ENCODE measurements at regions of chr2 and their contacts with region 1.

Region 1: GRCh38 chr2:224938651-224939182 is 103.6 kb downstream of the DOCK10 start:
- DNase-seq: peak in 1 of 9 donors; percentile 56
- ATAC-seq: peak; percentile 56
- H3K4me3 ChIP-seq: no peak overlapping the region
- H3K4me3 Mint-ChIP-seq: peak overlapping the region; percentile 46 to 81 (median 68)
- H3K27ac ChIP-seq: peak overlapping the region; percentile 62
- H3K27ac Mint-ChIP-seq: peak overlapping the region; percentile 78 to 92 (median 86)
- H3K4me1 ChIP-seq: peaks cover 44 to 62% of the 10 kb centered on the region in 2 donors
- H3K4me1 Mint-ChIP-seq: peaks cover 60 to 100% (median 84%) of the 10 kb centered on the region in 7 donors
- H3K27me3 ChIP-seq: no peaks in the 10 kb centered on the region
- H3K27me3 Mint-ChIP-seq: no peaks in the 10 kb centered on the region

Region 2: GRCh38 chr2:224691563-224691962 is 247.2 kb before region 1 on chr2:
- CTCF ChIA-PET with region 1: no interaction called
- POLR2A ChIA-PET with region 1: no interaction called
- intact Hi-C with region 1: no loop called
- DNase-seq: no peak
- ATAC-seq: no peak
- H3K4me3 ChIP-seq: no peak overlapping the region
- H3K4me3 Mint-ChIP-seq: no peak overlapping the region
- H3K27ac ChIP-seq: no peak overlapping the region
- H3K27ac Mint-ChIP-seq: no peak overlapping the region
- H3K4me1 ChIP-seq: no peaks in the 10 kb centered on the region
- H3K4me1 Mint-ChIP-seq: no peaks in the 10 kb centered on the region
- H3K27me3 ChIP-seq: no peaks in the 10 kb centered on the region
- H3K27me3 Mint-ChIP-seq: peaks cover 0 to 3% (median 0%) of the 10 kb centered on the region in 5 donors

Region 3: GRCh38 chr2:224894356-224894755 is 44.4 kb before region 1 on chr2:
- CTCF ChIA-PET with region 1: no interaction called
- POLR2A ChIA-PET with region 1: no interaction called
- intact Hi-C with region 1: no loop called
- DNase-seq: peak in 4 of 9 donors; percentile 8 to 21 (median 10)
- ATAC-seq: peak; percentile 80
- H3K4me3 ChIP-seq: no peak overlapping the region
- H3K4me3 Mint-ChIP-seq: peak overlapping the region in 6 of 10 donors; percentile 8 to 75 (median 58)
- H3K27ac ChIP-seq: no peak overlapping the region
- H3K27ac Mint-ChIP-seq: peak overlapping the region; percentile 5 to 92 (median 69)
- H3K4me1 ChIP-seq: peaks cover 12 to 16% of the 10 kb centered on the region in 2 donors
- H3K4me1 Mint-ChIP-seq: peaks cover 35 to 76% (median 63%) of the 10 kb centered on the region in 7 donors
- H3K27me3 ChIP-seq: no peaks in the 10 kb centered on the region
- H3K27me3 Mint-ChIP-seq: no peaks in the 10 kb centered on the region

Region 4: DNA sequence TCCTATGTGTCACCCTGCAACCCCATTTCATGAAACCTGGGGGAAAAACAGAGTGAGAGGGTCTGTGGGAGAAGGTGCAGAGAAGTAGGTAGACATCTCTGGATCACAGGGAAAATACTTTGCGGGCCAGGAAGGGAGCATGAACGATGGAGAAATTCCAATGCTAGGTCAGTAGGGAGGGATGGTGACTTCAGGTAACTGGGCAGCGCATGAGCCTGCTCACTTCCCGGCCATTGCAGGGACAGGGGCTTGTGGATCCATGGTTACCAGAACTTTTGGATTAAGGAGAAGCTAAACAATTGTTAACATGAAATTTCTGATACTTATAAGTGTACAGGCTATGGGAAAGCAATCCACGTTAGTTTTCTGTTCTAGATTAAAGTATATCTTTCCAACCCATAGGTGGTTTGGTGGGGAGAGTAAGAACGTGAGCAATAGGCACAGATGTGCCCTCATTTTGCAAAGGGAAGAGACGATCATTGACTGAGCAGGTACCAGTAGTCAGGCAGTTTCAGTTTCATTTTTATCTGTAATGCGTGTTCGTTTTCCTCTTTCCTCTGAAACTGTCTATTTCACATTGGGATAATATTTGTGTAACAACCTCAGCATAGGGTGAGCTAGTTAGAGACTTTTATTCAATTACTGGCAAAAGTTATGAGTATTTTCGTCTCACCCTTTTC is 525.8 kb after region 1 on chr2:
- CTCF ChIA-PET with region 1: no interaction called
- POLR2A ChIA-PET with region 1: no interaction called
- intact Hi-C with region 1: loop called in 1 of 2 experiments (anchors 10 kb)
- DNase-seq: peak in 6 of 9 donors; percentile 16 to 48 (median 38)
- ATAC-seq: peak; percentile 67
- H3K4me3 ChIP-seq: peak overlapping the region; percentile 40
- H3K4me3 Mint-ChIP-seq: peak overlapping the region; percentile 81 to 93 (median 86)
- H3K27ac ChIP-seq: no peak overlapping the region
- H3K27ac Mint-ChIP-seq: peak overlapping the region; percentile 76 to 96 (median 86)
- H3K4me1 ChIP-seq: peaks cover 7 to 8% of the 10 kb centered on the region in 2 donors
- H3K4me1 Mint-ChIP-seq: peaks cover 11 to 40% (median 22%) of the 10 kb centered on the region in 7 donors
- H3K27me3 ChIP-seq: no peaks in the 10 kb centered on the region
- H3K27me3 Mint-ChIP-seq: peaks cover 0 to 6% (median 0%) of the 10 kb centered on the region in 5 donors

Measured in naive thymus-derived CD4-positive, alpha-beta T cell (primary cell).